HCT116 (cell line): ENCODE measurements at regions of chr18 and their contacts with region 1.

Region 1: DNA sequence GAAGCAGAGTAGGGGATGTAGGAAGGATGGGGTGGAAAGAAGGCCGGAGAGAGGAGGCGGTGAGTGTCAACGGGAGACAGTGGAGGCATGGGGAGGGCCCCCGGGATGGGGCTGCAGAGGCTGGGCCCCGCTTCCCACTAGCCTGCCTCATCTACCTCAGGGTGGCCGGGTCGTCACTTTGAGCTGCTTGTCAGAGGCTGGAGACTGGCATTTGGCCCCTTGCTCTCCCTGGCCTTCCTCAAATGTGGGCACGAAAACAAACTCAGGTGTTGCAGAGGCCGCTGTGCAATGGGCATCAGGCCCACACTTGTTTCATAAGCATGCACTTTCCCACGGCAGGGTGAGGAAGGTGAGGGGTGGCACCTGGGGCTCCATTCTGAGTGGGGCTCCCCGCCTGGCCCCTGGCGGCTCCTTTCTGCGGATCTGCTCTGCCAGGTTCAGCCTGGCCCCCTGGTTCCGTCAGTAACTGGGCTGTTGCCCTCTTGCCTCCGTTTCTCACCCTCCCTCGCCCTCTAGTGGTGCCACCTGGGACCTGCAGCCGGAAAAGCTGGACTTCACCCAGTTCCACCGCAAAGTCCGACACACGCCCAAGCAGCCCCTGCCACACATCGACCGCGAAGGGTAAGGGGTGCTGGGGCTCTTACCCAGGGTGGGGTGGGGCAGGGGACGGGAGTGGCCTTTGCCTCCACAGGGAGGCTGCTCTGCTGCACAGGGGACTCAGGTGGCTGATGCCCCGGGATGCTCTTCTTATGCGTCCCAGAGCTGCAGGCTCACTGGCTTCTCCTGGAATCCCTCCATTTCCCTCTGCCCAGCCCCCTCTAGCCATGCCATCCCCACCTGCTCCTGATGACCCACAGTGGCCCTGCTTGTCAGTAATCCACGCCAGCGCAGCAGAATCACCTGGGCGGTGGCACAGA is 125.4 kb downstream of the CTIF start:
- DNase-seq: no peak
- ATAC-seq: peak; percentile 72
- H3K4me3 ChIP-seq: no peak overlapping the region
- H3K27ac ChIP-seq: no peak overlapping the region
- H3K4me1 ChIP-seq: peaks cover 22 to 27% of the 10 kb centered on the region in 2 experiments
- H3K27me3 ChIP-seq: no peaks in the 10 kb centered on the region
- CTCF ChIP-seq: peak; percentile 64 to 89 (median 86); a peak in 5 of 6 replicates
- POLR2A ChIP-seq: no peak
- RAD21 ChIP-seq: peak; percentile 84

Region 2: GRCh38 chr18:48022531-48023329 is 641.5 kb before region 1 on chr18:
- CTCF ChIA-PET with region 1: no interaction called
- POLR2A ChIA-PET with region 1: no interaction called
- RAD21 ChIA-PET with region 1: no interaction called
- intact Hi-C with region 1: loop called (anchors 5 kb)
- DNase-seq: peak; percentile 62
- ATAC-seq: peak; percentile 83
- H3K4me3 ChIP-seq: no peak overlapping the region
- H3K27ac ChIP-seq: no peak overlapping the region
- H3K4me1 ChIP-seq: peaks cover 4 to 8% of the 10 kb centered on the region in 2 experiments; a peak in 3 of 4 replicates
- H3K27me3 ChIP-seq: no peaks in the 10 kb centered on the region; the same call in 1 of the 2 replicates
- CTCF ChIP-seq: peak; percentile 51 to 81 (median 66); a peak in 5 of 6 replicates
- POLR2A ChIP-seq: no peak
- RAD21 ChIP-seq: peak; percentile 88

Region 3: GRCh38 chr18:48475635-48476549 is 188.3 kb before region 1 on chr18:
- CTCF ChIA-PET with region 1: interaction called, 28 read pairs
- POLR2A ChIA-PET with region 1: no interaction called
- RAD21 ChIA-PET with region 1: no interaction called
- intact Hi-C with region 1: loop called (anchors 1 kb)
- DNase-seq: peak; percentile 67
- ATAC-seq: peak; percentile 98
- H3K4me3 ChIP-seq: no peak overlapping the region
- H3K27ac ChIP-seq: no peak overlapping the region
- H3K4me1 ChIP-seq: no peaks in the 10 kb centered on the region
- H3K27me3 ChIP-seq: no peaks in the 10 kb centered on the region
- CTCF ChIP-seq: peak; percentile 81 to 93 (median 90)
- POLR2A ChIP-seq: no peak
- RAD21 ChIP-seq: peak; percentile 95

Region 4: GRCh38 chr18:48538531-48539405 is 125.4 kb before region 1 on chr18 and contains the start of gene CTIF:
- CTCF ChIA-PET with region 1: no interaction called
- POLR2A ChIA-PET with region 1: no interaction called
- RAD21 ChIA-PET with region 1: no interaction called
- intact Hi-C with region 1: loop called (anchors 10 kb)
- DNase-seq: peak; percentile 91
- ATAC-seq: peak; percentile 72
- H3K4me3 ChIP-seq: peak within 1 kb of the TSS; percentile 75 to 87
- H3K27ac ChIP-seq: peak within 1 kb of the TSS; percentile 37; the same call in 1 of the 2 replicates
- H3K4me1 ChIP-seq: peaks cover 25 to 37% of the 10 kb centered on the region in 2 experiments
- H3K27me3 ChIP-seq: no peaks in the 10 kb centered on the region
- CTCF ChIP-seq: no peak
- POLR2A ChIP-seq: no peak
- RAD21 ChIP-seq: no peak
- total RNA-seq, gene CTIF: 19.7 TPM